Right ventricle myocardium inferior (tissue), 1 donor: ENCODE measurements at regions of chr1 and their contacts with region 1.

Region 1: DNA sequence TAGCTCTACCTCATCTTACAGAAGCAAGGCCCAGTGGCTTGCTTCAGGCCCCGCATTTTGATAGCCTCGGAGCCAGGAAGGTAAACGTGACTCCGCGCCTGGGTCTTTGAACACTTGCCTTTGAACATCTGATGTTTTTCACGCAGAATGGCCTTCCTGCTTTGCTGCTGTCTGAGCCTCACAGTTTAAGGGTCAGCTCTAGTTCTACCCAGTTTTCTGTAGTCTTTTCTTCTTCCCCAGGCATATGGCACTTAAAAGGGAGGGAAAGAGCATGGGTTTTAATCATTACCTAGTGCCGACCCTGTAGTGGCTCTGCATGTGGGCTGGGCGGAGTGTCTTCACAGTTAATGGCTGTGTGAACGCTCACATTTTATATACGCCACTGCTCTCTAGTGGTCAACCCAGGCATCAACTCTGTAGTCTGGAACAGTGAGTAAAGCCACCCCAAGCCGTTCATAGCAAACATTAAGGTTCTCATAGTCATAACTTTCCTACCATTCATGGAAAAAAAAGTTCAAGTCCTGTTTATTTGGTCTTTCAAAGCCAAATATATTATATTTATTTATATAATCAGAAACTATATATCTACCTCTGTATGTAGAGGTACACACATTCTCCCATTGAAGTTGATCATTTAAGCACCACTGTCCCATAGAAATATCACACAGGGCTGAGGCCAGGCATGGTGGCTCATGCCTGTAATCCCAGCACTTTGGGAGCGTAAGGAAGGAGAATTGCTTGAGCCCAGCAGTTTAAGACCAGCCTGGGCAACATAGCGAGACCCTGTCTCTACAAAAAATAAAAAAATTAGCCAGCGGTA is 78.1 kb downstream of the IER5 start:
- DNase-seq: no peak
- ATAC-seq: peak; percentile 97

Region 2: GRCh38 chr1:180515864-180516388 is 650.7 kb before region 1 on chr1:
- intact Hi-C with region 1: loop called (anchors 10 kb)
- DNase-seq: no peak
- ATAC-seq: peak; percentile 95

Region 3: GRCh38 chr1:180881806-180882509 is 284.6 kb before region 1 on chr1:
- intact Hi-C with region 1: loop called (anchors 5 kb)
- DNase-seq: no peak
- ATAC-seq: peak; percentile 45

Region 4: GRCh38 chr1:181013144-181013543 is 153.4 kb before region 1 on chr1:
- intact Hi-C with region 1: no loop called
- DNase-seq: no peak
- ATAC-seq: no peak

Region 5: DNA sequence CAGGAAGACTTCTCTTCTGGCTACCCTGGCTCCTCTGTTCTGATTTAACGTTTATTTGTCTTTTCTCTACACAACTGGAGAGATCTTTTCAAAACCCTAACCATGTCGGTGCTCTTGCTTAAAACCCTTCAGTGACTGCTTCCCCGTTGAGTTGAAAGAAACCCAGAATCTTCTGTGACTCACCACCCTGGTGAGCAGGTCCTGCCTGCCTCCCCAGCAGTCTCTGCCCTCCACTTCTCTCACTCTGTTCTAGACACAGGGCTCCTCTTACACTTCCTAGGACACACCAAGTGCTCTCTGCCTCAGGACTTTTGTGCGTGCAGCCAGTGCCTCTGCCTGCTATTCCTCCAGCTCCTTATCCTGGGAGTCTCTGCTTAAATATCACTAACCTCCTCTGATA is 53.4 kb after region 1 on chr1:
- intact Hi-C with region 1: no loop called
- DNase-seq: no peak
- ATAC-seq: no peak